A549 (cell line): ENCODE measurements at regions of chr15 and their contacts with region 1.

Region 1: DNA sequence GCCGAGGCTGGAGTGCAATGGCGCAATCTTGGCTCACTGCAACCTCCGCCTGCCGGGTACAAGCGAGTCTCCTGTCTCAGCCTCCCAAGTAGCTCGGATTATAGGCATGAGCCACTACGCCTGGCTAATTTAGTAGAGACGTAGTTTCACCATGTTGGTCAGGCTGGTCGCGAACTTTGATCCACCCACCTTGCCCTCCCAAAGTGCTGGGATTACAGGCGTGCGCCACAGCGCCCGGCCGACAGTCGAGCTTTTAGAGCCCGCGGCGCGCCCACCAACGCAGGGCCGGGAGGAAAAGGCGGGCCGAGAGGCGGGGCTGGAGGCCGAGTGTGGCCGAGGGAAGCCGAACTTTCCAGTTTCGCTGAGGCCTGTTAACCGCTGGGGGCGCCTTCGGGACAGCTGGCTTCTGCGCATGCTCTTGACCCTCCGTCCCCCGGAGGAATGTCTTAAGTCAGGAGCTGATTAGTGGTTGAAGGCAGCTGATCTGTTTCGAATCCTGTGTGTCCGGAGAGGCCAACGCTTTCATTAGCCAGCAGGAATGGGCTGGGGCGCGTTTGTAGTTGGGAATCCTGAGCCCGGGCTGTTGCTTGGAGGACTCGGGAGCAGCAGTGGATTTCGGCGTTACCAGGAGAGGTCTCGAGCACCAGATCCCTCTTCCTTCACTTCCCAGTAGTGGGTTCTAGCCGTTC is 10.0 kb downstream of the RPLP1 start:
- DNase-seq: peak; percentile 99 to 100
- ATAC-seq: peak; percentile 78 to 88
- H3K4me3 ChIP-seq: peak overlapping the region; percentile 59
- H3K27ac ChIP-seq: peak overlapping the region; percentile 90 to 92
- H3K4me1 ChIP-seq: peaks cover 31% of the 10 kb centered on the region
- CTCF ChIP-seq: peak; percentile 82
- EP300 ChIP-seq: no peak
- POLR2A ChIP-seq: peak; percentile 54
- RAD21 ChIP-seq: no peak

Region 2: DNA sequence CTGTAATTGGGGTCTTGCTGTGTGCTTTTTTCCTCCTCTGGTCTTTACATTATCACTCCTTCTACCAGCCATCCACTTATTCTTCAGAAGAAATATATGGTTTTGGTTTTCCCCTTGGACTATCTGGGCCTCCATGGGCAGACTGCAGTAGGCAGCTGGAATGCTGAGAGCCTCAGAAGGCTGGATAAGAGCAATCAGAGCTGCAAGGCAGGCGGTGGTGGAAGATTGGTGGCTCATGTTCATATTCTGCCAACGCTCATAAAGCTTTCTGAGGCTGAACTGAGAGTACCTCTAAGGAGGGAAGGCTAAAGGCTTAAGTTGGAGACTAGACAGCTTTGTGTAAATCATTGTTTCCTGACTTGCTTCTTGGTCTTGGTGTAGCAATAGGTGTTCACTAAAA is 15.7 kb before region 1 on chr15:
- CTCF ChIA-PET with region 1: interaction called, 41 read pairs
- POLR2A ChIA-PET with region 1: interaction called, 112 read pairs
- DNase-seq: no peak
- ATAC-seq: 0 out of 6 replicates have a peak, but pooled peaks of 1 of the 2 experiments have one; percentile 17
- H3K4me3 ChIP-seq: no peak overlapping the region
- H3K27ac ChIP-seq: no peak overlapping the region
- H3K4me1 ChIP-seq: peaks cover 10% of the 10 kb centered on the region
- CTCF ChIP-seq: no peak
- EP300 ChIP-seq: no peak
- POLR2A ChIP-seq: no peak
- RAD21 ChIP-seq: no peak